ENCODE measurements at regions of chr1 and their contacts with region 1.

Region 1: GRCh38 chr1:228500901-228501871 is 14.0 kb downstream of the RNF187 start:
- DNase-seq: peak; percentile 90
- ATAC-seq: peak; percentile 94
- H3K4me3 ChIP-seq: peak overlapping the region in 4 of 5 experiments; percentile 26 to 51 (median 47)
- H3K4me3 Mint-ChIP-seq: peak overlapping the region; percentile 83
- H3K27ac ChIP-seq: peak overlapping the region; percentile 51 to 54
- H3K27ac Mint-ChIP-seq: peak overlapping the region; percentile 86
- H3K4me1 ChIP-seq: peaks cover 20% of the 10 kb centered on the region in 2 donors
- H3K4me1 Mint-ChIP-seq: peaks cover 20% of the 10 kb centered on the region
- H3K27me3 ChIP-seq: peaks cover 0 to 3% (median 0%) of the 10 kb centered on the region in 4 experiments
- H3K27me3 Mint-ChIP-seq: peaks cover 6% of the 10 kb centered on the region
- CTCF ChIP-seq: peak; percentile 91

Region 2: GRCh38 chr1:228131766-228132165 is 369.4 kb before region 1 on chr1:
- CTCF ChIA-PET with region 1: interaction called, 5 read pairs
- POLR2A ChIA-PET with region 1: no interaction called
- intact Hi-C with region 1: loop called (anchors 5 kb)
- DNase-seq: no peak
- ATAC-seq: no peak
- H3K4me3 ChIP-seq: no peak overlapping the region
- H3K4me3 Mint-ChIP-seq: no peak overlapping the region
- H3K27ac ChIP-seq: no peak overlapping the region
- H3K27ac Mint-ChIP-seq: no peak overlapping the region
- H3K4me1 ChIP-seq: peaks cover 2 to 10% of the 10 kb centered on the region in 2 donors
- H3K4me1 Mint-ChIP-seq: peaks cover 14% of the 10 kb centered on the region
- H3K27me3 ChIP-seq: peaks cover 0 to 3% (median 1%) of the 10 kb centered on the region in 4 experiments
- H3K27me3 Mint-ChIP-seq: peaks cover 17% of the 10 kb centered on the region
- CTCF ChIP-seq: no peak

Region 3: GRCh38 chr1:228150461-228151179 is 350.6 kb before region 1 on chr1:
- CTCF ChIA-PET with region 1: no interaction called
- POLR2A ChIA-PET with region 1: no interaction called
- intact Hi-C with region 1: no loop called
- DNase-seq: no peak
- ATAC-seq: no peak
- H3K4me3 ChIP-seq: no peak overlapping the region
- H3K4me3 Mint-ChIP-seq: no peak overlapping the region
- H3K27ac ChIP-seq: no peak overlapping the region
- H3K27ac Mint-ChIP-seq: no peak overlapping the region
- H3K4me1 ChIP-seq: no peaks in the 10 kb centered on the region
- H3K4me1 Mint-ChIP-seq: no peaks in the 10 kb centered on the region
- H3K27me3 ChIP-seq: no peaks in the 10 kb centered on the region
- H3K27me3 Mint-ChIP-seq: no peaks in the 10 kb centered on the region
- CTCF ChIP-seq: no peak

Region 4: DNA sequence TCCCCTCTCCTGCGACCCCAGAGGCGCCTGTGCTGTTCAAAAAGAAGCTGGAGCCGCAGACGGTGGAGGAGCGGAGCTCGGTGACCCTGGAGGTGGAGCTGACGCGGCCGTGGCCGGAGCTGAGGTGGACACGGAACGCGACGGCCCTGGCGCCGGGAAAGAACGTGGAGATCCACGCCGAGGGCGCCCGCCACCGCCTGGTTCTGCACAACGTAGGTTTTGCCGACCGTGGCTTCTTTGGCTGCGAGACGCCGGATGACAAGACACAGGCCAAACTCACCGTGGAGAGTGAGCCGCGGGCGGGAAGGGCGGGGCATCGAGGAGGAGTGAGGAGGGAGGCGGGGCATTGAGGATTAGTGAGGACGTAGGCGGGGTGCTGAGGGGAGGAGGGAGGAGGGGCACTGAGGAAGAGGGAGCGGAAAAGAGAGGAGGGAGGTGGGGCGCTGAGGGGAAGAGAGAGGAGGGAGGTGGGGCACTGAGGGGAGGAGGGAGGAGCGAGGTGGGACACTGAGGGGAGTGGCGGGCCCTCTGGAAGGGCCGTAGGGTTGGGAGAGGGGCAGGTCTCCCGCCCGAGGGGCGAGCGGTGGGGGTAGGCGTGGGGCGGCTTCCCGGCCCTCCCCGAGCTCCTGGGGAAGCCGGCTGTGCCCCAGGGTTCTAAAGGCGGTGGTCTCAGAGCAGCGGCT is 225.3 kb before region 1 on chr1:
- CTCF ChIA-PET with region 1: no interaction called
- POLR2A ChIA-PET with region 1: no interaction called
- intact Hi-C with region 1: loop called (anchors 2 kb)
- DNase-seq: peak; percentile 89
- ATAC-seq: peak; percentile 96
- H3K4me3 ChIP-seq: peak overlapping the region in 4 of 5 experiments; percentile 55 to 73 (median 67)
- H3K4me3 Mint-ChIP-seq: peak overlapping the region; percentile 82
- H3K27ac ChIP-seq: peak overlapping the region; percentile 36 to 44
- H3K27ac Mint-ChIP-seq: peak overlapping the region; percentile 53
- H3K4me1 ChIP-seq: peaks cover 5 to 19% of the 10 kb centered on the region in 2 donors
- H3K4me1 Mint-ChIP-seq: peaks cover 11% of the 10 kb centered on the region
- H3K27me3 ChIP-seq: no peaks in the 10 kb centered on the region
- H3K27me3 Mint-ChIP-seq: no peaks in the 10 kb centered on the region
- CTCF ChIP-seq: no peak

Region 5: DNA sequence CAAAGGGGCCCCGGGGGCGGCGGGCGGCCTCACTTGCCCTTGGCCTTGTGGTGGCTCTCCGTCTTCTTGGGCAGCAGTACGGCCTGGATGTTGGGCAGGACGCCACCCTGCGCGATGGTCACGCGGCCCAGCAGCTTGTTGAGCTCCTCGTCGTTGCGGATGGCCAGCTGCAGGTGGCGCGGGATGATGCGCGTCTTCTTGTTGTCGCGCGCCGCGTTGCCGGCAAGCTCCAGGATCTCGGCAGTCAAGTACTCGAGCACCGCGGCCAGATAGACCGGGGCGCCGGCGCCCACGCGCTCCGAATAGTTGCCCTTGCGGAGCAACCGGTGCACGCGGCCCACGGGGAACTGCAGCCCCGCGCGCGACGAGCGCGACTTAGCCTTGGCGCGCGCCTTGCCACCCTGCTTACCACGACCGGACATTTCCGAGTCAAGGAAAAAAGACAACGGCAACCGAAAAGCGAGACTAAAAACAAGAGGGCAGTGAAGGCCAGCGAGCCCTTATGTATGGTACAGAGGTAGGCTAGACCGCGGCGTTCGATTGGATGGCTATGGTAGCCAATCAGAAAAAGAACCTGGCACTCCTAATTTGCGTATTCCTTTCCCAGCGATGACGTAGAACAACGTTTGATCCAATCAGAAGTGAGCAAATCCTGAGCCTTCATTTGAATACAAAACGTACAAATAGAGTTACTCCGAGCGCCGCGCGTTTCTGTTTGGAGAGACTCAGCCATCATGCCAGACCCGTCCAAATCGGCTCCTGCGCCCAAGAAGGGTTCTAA is 43.6 kb before region 1 on chr1:
- CTCF ChIA-PET with region 1: no interaction called
- POLR2A ChIA-PET with region 1: no interaction called
- intact Hi-C with region 1: loop called (anchors 1 kb)
- DNase-seq: peak; percentile 90
- ATAC-seq: peak; percentile 88
- H3K4me3 ChIP-seq: peak overlapping the region in 4 of 5 experiments; percentile 44 to 58 (median 48)
- H3K4me3 Mint-ChIP-seq: peak overlapping the region; percentile 92
- H3K27ac ChIP-seq: peak overlapping the region; percentile 72 to 79
- H3K27ac Mint-ChIP-seq: peak overlapping the region; percentile 98
- H3K4me1 ChIP-seq: peaks cover 24 to 30% of the 10 kb centered on the region in 2 donors
- H3K4me1 Mint-ChIP-seq: peaks cover 27% of the 10 kb centered on the region
- H3K27me3 ChIP-seq: peaks cover 0 to 44% (median 17%) of the 10 kb centered on the region in 4 experiments
- H3K27me3 Mint-ChIP-seq: peaks cover 37% of the 10 kb centered on the region
- CTCF ChIP-seq: no peak

Region 6: GRCh38 chr1:228515200-228515834 is 14.1 kb after region 1 on chr1:
- CTCF ChIA-PET with region 1: interaction called, 29 read pairs
- POLR2A ChIA-PET with region 1: no interaction called
- intact Hi-C with region 1: loop called (anchors 2 kb)
- DNase-seq: peak; percentile 64
- ATAC-seq: peak; percentile 28
- H3K4me3 ChIP-seq: no peak overlapping the region
- H3K4me3 Mint-ChIP-seq: no peak overlapping the region
- H3K27ac ChIP-seq: no peak overlapping the region
- H3K27ac Mint-ChIP-seq: no peak overlapping the region
- H3K4me1 ChIP-seq: no peaks in the 10 kb centered on the region
- H3K4me1 Mint-ChIP-seq: no peaks in the 10 kb centered on the region
- H3K27me3 ChIP-seq: peaks cover 0 to 17% (median 4%) of the 10 kb centered on the region in 4 experiments
- H3K27me3 Mint-ChIP-seq: peaks cover 38% of the 10 kb centered on the region
- CTCF ChIP-seq: peak; percentile 82

Region 7: DNA sequence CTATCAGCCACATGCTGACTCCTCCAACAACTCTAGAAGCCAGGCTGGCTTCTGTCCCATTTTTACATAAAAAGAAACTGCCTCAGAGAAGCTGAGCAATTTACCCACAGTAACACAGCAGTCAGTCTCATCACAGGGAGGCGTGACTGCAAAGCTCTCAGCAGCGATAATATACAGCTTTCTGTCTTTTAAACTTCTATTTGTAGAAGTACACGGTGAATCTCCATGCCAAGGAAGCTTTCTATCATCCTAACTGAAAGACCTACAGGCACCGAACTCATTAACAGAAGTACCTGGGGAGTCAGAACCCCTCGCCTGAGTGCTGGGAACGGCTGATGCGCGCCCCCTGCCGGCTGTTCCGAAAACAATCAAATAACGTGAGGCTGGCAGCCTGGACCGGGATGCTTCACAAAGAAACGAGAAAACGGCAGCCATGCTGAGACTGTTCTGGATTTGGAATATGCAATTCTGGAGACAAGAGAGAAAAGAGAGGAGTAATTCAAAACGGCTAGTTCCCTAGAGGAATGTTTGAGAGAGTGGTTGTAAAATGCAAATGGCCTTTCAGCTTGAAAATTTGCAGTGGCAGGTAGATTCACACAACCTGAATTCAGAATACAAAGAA is 726.2 kb after region 1 on chr1:
- CTCF ChIA-PET with region 1: interaction called, 6 read pairs
- POLR2A ChIA-PET with region 1: no interaction called
- intact Hi-C with region 1: loop called (anchors 5 kb)
- DNase-seq: peak; percentile 77
- ATAC-seq: peak; percentile 67
- H3K4me3 ChIP-seq: no peak overlapping the region
- H3K4me3 Mint-ChIP-seq: no peak overlapping the region
- H3K27ac ChIP-seq: no peak overlapping the region
- H3K27ac Mint-ChIP-seq: no peak overlapping the region
- H3K4me1 ChIP-seq: peaks cover 4 to 5% of the 10 kb centered on the region in 2 donors
- H3K4me1 Mint-ChIP-seq: peaks cover 10% of the 10 kb centered on the region
- H3K27me3 ChIP-seq: peaks cover 0 to 34% (median 16%) of the 10 kb centered on the region in 4 experiments
- H3K27me3 Mint-ChIP-seq: peaks cover 39% of the 10 kb centered on the region
- CTCF ChIP-seq: peak; percentile 90

Measured in B cell (primary cell).